ENCODE measurements at regions of chr5 and their contacts with region 1.

Region 1: GRCh38 chr5:6820851-6821479 is 107.7 kb downstream of the TENT4A start:
- DNase-seq: peak; percentile 33
- H3K4me3 Mint-ChIP-seq: no peak overlapping the region
- H3K27ac Mint-ChIP-seq: no peak overlapping the region
- H3K4me1 Mint-ChIP-seq: peaks cover 11% of the 10 kb centered on the region
- H3K27me3 Mint-ChIP-seq: peaks cover 40% of the 10 kb centered on the region
- CTCF ChIP-seq: peak; percentile 69

Region 2: GRCh38 chr5:6765612-6766525 is 55.1 kb before region 1 on chr5:
- CTCF ChIA-PET with region 1: interaction called, 5 read pairs
- POLR2A ChIA-PET with region 1: interaction called, 3 read pairs
- intact Hi-C with region 1: loop called (anchors 5 kb)
- DNase-seq: peak; percentile 89
- H3K4me3 Mint-ChIP-seq: peak overlapping the region; percentile 65
- H3K27ac Mint-ChIP-seq: no peak overlapping the region
- H3K4me1 Mint-ChIP-seq: peaks cover 23% of the 10 kb centered on the region
- H3K27me3 Mint-ChIP-seq: no peaks in the 10 kb centered on the region
- CTCF ChIP-seq: peak; percentile 91

Region 3: GRCh38 chr5:7261049-7261448 is 440.1 kb after region 1 on chr5:
- CTCF ChIA-PET with region 1: no interaction called
- POLR2A ChIA-PET with region 1: no interaction called
- intact Hi-C with region 1: loop called (anchors 2 kb)
- DNase-seq: peak; percentile 25
- H3K4me3 Mint-ChIP-seq: no peak overlapping the region
- H3K27ac Mint-ChIP-seq: no peak overlapping the region
- H3K4me1 Mint-ChIP-seq: no peaks in the 10 kb centered on the region
- H3K27me3 Mint-ChIP-seq: peaks cover 2% of the 10 kb centered on the region
- CTCF ChIP-seq: peak; percentile 45

Region 4: GRCh38 chr5:7376871-7377270 is 555.9 kb after region 1 on chr5:
- CTCF ChIA-PET with region 1: no interaction called
- POLR2A ChIA-PET with region 1: no interaction called
- intact Hi-C with region 1: loop called (anchors 2 kb)
- DNase-seq: no peak
- H3K4me3 Mint-ChIP-seq: no peak overlapping the region
- H3K27ac Mint-ChIP-seq: no peak overlapping the region
- H3K4me1 Mint-ChIP-seq: no peaks in the 10 kb centered on the region
- H3K27me3 Mint-ChIP-seq: peaks cover 23% of the 10 kb centered on the region
- CTCF ChIP-seq: no peak